SK-N-SH (cell line): ENCODE measurements at regions of chr3 and their contacts with region 1.

Region 1: GRCh38 chr3:160003520-160004128 is 15.0 kb downstream of the IL12A start:
- DNase-seq: peak; percentile 57
- H3K4me3 ChIP-seq: peak overlapping the region in 1 of 2 experiments; percentile 23; a peak in 1 of 4 replicates
- H3K27ac ChIP-seq: no peak overlapping the region
- H3K4me1 ChIP-seq: peaks cover 0 to 11% of the 10 kb centered on the region in 2 experiments; a peak in 2 of 4 replicates
- H3K27me3 ChIP-seq: no peaks in the 10 kb centered on the region
- CTCF ChIP-seq: peak; percentile 80
- EP300 ChIP-seq: no peak
- RAD21 ChIP-seq: peak; percentile 72

Region 2: GRCh38 chr3:159796744-159797143 is 206.9 kb before region 1 on chr3:
- CTCF ChIA-PET with region 1: interaction called, 12 read pairs
- POLR2A ChIA-PET with region 1: no interaction called
- DNase-seq: no peak
- H3K4me3 ChIP-seq: no peak overlapping the region
- H3K27ac ChIP-seq: peak overlapping the region in 1 of 2 experiments; percentile 75; a peak in 2 of 4 replicates
- H3K4me1 ChIP-seq: peaks cover 0 to 2% of the 10 kb centered on the region in 2 experiments; a peak in 1 of 4 replicates
- H3K27me3 ChIP-seq: no peaks in the 10 kb centered on the region
- CTCF ChIP-seq: no peak
- EP300 ChIP-seq: no peak
- RAD21 ChIP-seq: no peak

Region 3: DNA sequence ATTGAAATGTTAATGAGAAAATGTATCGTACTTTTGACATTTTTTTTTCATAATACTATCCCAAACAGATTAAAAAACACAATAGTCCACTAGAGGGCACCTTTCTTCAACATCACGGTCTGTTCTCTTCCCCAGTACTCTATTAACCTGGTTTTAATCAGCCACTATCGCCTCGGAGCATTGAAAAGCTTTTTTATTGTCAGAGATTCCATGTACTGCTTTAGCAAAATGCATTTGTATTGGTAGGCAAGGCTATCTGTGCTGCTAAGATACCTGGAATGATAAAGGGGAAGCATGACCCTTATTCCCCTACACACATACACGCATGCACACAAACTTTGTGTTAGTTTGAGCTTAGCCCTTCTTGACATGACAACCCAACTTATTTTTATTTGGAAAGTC is 175.1 kb before region 1 on chr3:
- CTCF ChIA-PET with region 1: interaction called, 173 read pairs
- POLR2A ChIA-PET with region 1: no interaction called
- DNase-seq: peak; percentile 74
- H3K4me3 ChIP-seq: peak overlapping the region in 1 of 2 experiments; percentile 23; a peak in 1 of 4 replicates
- H3K27ac ChIP-seq: peak overlapping the region; percentile 4 to 96; a peak in 3 of 4 replicates
- H3K4me1 ChIP-seq: peaks cover 20 to 39% of the 10 kb centered on the region in 2 experiments
- H3K27me3 ChIP-seq: no peaks in the 10 kb centered on the region
- CTCF ChIP-seq: peak; percentile 73
- EP300 ChIP-seq: peak in 1 of 2 experiments; percentile 81; a peak in 2 of 4 replicates
- RAD21 ChIP-seq: peak; percentile 89

Region 4: DNA sequence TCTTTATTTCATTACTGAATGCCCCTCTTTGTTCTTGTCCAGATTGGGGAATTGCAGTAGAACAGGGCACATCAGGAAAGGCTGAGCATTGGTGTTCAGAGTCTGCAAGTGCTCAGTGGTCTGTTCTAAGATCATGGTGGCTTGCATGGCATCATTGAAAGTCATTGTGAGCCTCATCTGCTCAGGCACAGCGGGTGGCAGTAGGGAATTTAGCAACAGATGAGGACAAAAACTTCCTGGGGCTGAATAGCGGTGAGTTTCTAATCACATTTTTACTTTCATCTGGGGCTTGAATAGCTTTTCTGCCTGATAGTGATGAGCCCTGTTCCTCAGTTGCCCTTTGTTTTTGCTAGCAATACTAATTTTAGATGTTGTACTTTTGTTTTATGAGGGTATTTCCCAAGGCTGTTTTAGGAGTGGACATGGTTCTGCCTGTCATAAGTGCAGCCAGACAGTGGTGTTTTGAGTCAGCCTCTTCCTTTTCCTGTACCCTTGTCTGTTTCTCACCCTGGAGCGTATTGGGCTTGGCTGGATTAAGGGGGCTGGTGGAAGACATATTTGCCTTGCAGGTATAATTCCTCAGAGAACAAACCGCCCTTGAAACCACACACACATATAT is 142.1 kb before region 1 on chr3:
- CTCF ChIA-PET with region 1: interaction called, 58 read pairs
- POLR2A ChIA-PET with region 1: interaction called, 3 read pairs
- DNase-seq: no peak
- H3K4me3 ChIP-seq: no peak overlapping the region
- H3K27ac ChIP-seq: peak overlapping the region in 1 of 2 experiments; percentile 87; a peak in 2 of 4 replicates
- H3K4me1 ChIP-seq: peaks cover 20 to 76% of the 10 kb centered on the region in 2 experiments
- H3K27me3 ChIP-seq: no peaks in the 10 kb centered on the region
- CTCF ChIP-seq: no peak
- EP300 ChIP-seq: no peak
- RAD21 ChIP-seq: no peak

Region 5: GRCh38 chr3:159988617-159989271 is 14.9 kb before region 1 on chr3 and contains the start of gene IL12A:
- CTCF ChIA-PET with region 1: interaction called, 228 read pairs
- POLR2A ChIA-PET with region 1: no interaction called
- DNase-seq: peak; percentile 92
- H3K4me3 ChIP-seq: peak within 1 kb of the TSS; percentile 71 to 87
- H3K27ac ChIP-seq: no peak within 1 kb of the TSS
- H3K4me1 ChIP-seq: peaks cover 0 to 5% of the 10 kb centered on the region in 2 experiments; a peak in 1 of 4 replicates
- H3K27me3 ChIP-seq: no peaks in the 10 kb centered on the region
- CTCF ChIP-seq: peak; percentile 97
- EP300 ChIP-seq: no peak
- RAD21 ChIP-seq: peak; percentile 50
- polyA plus RNA-seq, gene IL12A: 0.97 and 1.9 TPM in 2 replicates

Region 6: DNA sequence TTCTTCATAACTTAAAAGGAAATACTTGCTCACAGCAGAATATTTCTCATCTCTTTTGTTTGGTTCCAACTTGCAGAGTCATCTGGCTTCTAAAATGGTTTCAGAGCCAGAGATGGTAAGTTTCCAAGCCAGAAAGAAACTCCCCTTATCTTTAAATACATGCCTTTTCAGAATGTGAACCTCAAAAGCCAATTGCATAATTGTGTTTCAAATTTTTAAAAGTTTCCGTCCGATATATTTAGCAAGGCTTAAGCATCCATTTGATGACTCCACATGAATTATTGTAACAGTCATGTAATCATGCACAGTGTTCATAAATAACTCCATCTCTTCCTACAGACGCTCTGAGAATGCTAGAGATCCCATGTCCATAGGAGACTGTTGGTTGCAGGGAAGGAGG is 181.0 kb after region 1 on chr3:
- CTCF ChIA-PET with region 1: no interaction called
- POLR2A ChIA-PET with region 1: no interaction called
- DNase-seq: no peak
- H3K4me3 ChIP-seq: no peak overlapping the region
- H3K27ac ChIP-seq: peak overlapping the region in 1 of 2 experiments; percentile 53; a peak in 1 of 4 replicates
- H3K4me1 ChIP-seq: peaks cover 0 to 19% of the 10 kb centered on the region in 2 experiments; a peak in 3 of 4 replicates
- H3K27me3 ChIP-seq: no peaks in the 10 kb centered on the region
- CTCF ChIP-seq: no peak
- EP300 ChIP-seq: no peak
- RAD21 ChIP-seq: no peak

Region 7: DNA sequence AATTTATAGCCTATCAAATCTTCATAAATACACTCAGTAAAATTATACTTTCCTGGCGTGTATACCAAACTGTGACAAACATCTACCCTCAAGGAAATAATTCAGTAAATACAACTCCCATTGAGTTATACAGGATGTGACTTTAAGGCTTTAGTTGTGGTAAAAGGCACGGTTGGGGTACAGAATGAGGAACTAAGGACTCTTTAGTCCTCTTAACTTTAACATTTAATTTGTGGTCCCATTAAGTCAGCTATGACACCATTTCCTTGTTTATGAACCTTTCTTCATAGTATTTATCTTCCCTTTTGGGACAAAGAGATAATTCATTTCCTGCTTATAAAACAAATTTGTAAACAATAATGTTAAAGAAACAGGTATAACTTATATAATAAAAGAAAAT is 365.2 kb after region 1 on chr3:
- CTCF ChIA-PET with region 1: no interaction called
- POLR2A ChIA-PET with region 1: no interaction called
- DNase-seq: no peak
- H3K4me3 ChIP-seq: no peak overlapping the region
- H3K27ac ChIP-seq: no peak overlapping the region
- H3K4me1 ChIP-seq: peaks cover 0 to 5% of the 10 kb centered on the region in 2 experiments; a peak in 2 of 4 replicates
- H3K27me3 ChIP-seq: no peaks in the 10 kb centered on the region
- CTCF ChIP-seq: no peak
- EP300 ChIP-seq: no peak
- RAD21 ChIP-seq: no peak